MCF 10A (cell line): ENCODE measurements at regions of chr7 and their contacts with region 1.

Region 1: DNA sequence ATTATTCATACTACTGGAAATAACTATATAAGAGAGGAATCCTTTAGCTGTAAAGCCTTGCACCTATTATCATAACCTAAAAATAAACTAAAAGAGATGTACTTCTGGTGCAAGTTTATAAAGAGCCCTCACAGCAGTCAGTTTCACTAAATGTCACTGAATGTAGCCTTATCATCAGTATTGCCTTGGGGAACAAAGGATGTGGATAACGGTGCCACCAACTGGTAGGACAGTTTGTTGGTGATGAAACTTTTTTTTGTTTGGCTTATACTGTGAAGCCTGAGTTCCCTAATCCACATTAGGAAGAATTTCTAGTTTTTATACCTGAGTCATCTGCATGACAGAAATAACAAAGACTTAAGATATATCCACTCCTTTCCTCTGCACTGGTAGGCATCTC is 117.9 kb upstream of the COL1A2 start:
- DNase-seq: peak; percentile 56
- H3K4me3 Mint-ChIP-seq: no peak overlapping the region
- H3K27ac Mint-ChIP-seq: no peak overlapping the region
- H3K4me1 Mint-ChIP-seq: no peaks in the 10 kb centered on the region
- H3K27me3 Mint-ChIP-seq: no peaks in the 10 kb centered on the region
- CTCF ChIP-seq: peak; percentile 49

Region 2: GRCh38 chr7:93622036-93623033 is 654.5 kb before region 1 on chr7:
- CTCF ChIA-PET with region 1: interaction called, 9 read pairs
- POLR2A ChIA-PET with region 1: no interaction called
- intact Hi-C with region 1: loop called (anchors 1 kb)
- DNase-seq: peak; percentile 41
- H3K4me3 Mint-ChIP-seq: no peak overlapping the region
- H3K27ac Mint-ChIP-seq: no peak overlapping the region
- H3K4me1 Mint-ChIP-seq: peaks cover 6% of the 10 kb centered on the region
- H3K27me3 Mint-ChIP-seq: peaks cover 91% of the 10 kb centered on the region
- CTCF ChIP-seq: peak; percentile 41

Region 3: GRCh38 chr7:93799750-93800357 is 476.9 kb before region 1 on chr7:
- CTCF ChIA-PET with region 1: interaction called, 15 read pairs
- POLR2A ChIA-PET with region 1: interaction called, 3 read pairs
- intact Hi-C with region 1: loop called (anchors 1 kb)
- DNase-seq: peak; percentile 34
- H3K4me3 Mint-ChIP-seq: no peak overlapping the region
- H3K27ac Mint-ChIP-seq: no peak overlapping the region
- H3K4me1 Mint-ChIP-seq: peaks cover 6% of the 10 kb centered on the region
- H3K27me3 Mint-ChIP-seq: no peaks in the 10 kb centered on the region
- CTCF ChIP-seq: peak; percentile 56

Region 4: DNA sequence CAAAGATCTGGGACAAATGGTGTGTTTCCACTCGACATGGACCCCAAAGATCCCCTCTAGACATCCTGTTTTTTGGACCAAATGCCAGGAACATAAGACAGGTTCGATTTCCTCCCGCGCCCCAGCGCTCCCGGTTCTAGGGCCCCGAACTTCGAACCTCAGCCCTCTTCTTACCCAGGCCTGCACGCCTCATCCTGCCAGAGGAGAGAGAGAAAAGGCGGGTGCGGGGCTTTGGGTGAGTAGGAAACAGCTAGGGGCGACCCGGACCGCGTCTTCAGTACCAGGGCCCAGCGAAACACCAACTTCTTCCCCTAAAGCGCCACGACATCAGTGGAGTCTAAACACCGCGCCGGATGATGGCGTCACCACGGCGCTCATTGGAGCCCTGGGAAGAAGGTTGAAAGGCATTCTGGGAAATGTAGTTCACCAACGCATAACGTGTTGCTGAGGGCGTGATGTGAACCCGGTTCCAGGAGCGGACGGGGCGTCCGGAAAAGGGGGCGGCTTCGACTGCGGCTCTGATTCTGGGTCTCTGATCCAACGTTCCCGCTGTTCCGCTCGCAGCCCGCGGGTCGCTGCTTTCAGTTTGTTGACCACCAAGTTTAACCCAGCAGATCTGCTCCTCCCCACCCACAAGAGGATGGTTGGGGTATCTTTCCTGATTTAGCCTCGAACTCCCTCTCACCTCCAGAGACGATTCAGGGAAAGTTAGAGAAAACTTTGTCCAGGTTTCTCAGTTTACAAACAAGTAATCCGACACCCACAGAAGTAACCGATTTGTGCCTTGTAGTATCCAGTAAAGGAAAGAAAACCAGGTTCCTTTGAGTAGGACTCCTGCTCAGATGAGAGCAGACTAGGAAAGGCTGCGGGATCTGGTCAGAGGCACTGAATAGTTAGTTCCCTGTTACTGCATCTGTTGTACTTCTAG is 272.5 kb before region 1 on chr7 and contains the start of gene BET1:
- CTCF ChIA-PET with region 1: no interaction called
- POLR2A ChIA-PET with region 1: no interaction called
- intact Hi-C with region 1: loop called (anchors 5 kb)
- DNase-seq: peak; percentile 98
- H3K4me3 Mint-ChIP-seq: peak within 1 kb of the TSS; percentile 100
- H3K27ac Mint-ChIP-seq: peak within 1 kb of the TSS; percentile 100
- H3K4me1 Mint-ChIP-seq: peaks cover 19% of the 10 kb centered on the region
- H3K27me3 Mint-ChIP-seq: no peaks in the 10 kb centered on the region
- CTCF ChIP-seq: no peak
- total RNA-seq, gene BET1: 54.4 and 72.7 TPM in 2 replicates